ENCODE measurements at regions of chr5 and their contacts with region 1.

Region 1: GRCh38 chr5:165209086-165209727 is 1703.8 kb downstream of the MAT2B start:
- DNase-seq: peak; percentile 33
- H3K4me3 ChIP-seq: no peak overlapping the region
- H3K27ac ChIP-seq: no peak overlapping the region
- H3K4me1 ChIP-seq: no peaks in the 10 kb centered on the region
- H3K27me3 ChIP-seq: no peaks in the 10 kb centered on the region

Region 2: DNA sequence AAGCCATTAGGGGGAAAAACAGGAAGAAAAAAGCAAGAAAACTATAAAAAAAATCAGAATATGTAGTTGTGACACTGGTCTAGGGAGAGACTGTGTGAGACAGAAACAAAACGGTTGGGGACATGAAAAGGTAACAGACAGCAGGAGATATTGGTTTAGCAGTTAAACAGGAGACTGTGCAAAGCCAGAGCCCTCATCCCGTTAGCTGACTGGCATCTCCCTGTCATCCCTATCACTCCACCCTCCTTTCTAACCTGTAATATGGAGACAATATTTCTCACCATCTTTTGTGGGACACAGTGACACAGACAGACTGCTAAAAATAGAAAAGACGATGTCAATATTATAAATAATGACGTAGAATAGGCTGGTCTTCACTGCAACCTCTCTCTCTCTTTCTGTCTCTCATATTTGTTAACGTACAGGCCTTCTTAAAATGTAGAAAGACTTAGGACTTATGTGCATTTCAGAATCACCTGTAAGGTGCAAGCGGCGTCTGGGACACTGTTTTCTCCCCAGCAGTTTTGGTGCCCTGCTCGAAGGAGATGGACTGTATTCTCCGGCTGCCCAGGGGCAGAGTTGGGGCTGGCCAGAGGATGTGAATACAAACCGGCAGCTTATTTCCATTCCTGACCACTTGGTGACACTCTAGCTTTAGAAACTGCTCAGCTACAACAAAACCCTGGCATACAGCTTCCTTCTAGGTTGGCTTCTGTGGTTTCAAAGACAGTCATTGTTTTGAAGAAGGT is 1513.2 kb before region 1 on chr5:
- in situ Hi-C with region 1: loop called (anchors 25 kb)
- DNase-seq: peak; percentile 82
- H3K4me3 ChIP-seq: no peak overlapping the region
- H3K27ac ChIP-seq: no peak overlapping the region
- H3K4me1 ChIP-seq: no peaks in the 10 kb centered on the region
- H3K27me3 ChIP-seq: no peaks in the 10 kb centered on the region

Region 3: GRCh38 chr5:164048359-164048926 is 1160.8 kb before region 1 on chr5:
- in situ Hi-C with region 1: loop called (anchors 25 kb)
- DNase-seq: no peak
- H3K4me3 ChIP-seq: no peak overlapping the region
- H3K27ac ChIP-seq: no peak overlapping the region
- H3K4me1 ChIP-seq: no peaks in the 10 kb centered on the region
- H3K27me3 ChIP-seq: no peaks in the 10 kb centered on the region